ENCODE measurements at regions of chr1 and their contacts with region 1.

Region 1: DNA sequence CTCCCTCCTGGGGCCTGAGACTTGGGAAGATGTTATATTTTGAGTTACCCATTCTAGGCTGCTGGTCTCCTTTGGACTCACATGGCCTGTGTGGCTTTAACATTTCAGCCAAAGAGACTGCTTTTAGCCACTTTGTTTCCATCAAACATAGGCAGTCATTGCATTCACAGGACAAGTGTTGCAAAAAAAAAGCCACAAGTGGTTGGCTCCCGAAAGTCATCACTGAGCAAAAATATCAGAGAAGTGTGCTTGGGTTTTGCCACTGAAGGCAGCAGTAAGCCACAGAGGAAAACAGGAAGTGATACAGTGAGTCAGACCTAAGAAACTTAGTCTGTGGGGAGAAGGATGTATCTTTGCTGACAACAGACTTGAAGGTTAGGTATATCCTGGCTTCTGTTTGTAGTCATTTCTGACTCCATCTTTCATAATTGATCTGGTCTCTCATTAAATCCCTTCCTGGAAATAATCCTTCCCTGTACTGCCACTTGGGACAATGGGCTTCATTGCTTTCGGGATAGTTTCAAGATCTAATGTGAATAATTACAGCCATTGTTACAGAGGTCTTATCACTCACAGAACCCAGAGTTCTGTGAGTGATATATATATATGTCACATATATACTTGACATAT is 80.9 kb downstream of the COLGALT2 start:
- DNase-seq: no peak
- ATAC-seq: peak; percentile 41 to 84 (median 52)
- H3K4me3 ChIP-seq: no peak overlapping the region
- H3K27ac ChIP-seq: peak overlapping the region in 7 of 10 donors; percentile 5 to 86 (median 44)
- H3K4me1 ChIP-seq: peaks cover 0 to 49% (median 12%) of the 10 kb centered on the region in 9 donors
- H3K27me3 ChIP-seq: no peaks in the 10 kb centered on the region
- CTCF ChIP-seq: peak in 3 of 9 donors; percentile 6 to 26 (median 15)

Region 2: DNA sequence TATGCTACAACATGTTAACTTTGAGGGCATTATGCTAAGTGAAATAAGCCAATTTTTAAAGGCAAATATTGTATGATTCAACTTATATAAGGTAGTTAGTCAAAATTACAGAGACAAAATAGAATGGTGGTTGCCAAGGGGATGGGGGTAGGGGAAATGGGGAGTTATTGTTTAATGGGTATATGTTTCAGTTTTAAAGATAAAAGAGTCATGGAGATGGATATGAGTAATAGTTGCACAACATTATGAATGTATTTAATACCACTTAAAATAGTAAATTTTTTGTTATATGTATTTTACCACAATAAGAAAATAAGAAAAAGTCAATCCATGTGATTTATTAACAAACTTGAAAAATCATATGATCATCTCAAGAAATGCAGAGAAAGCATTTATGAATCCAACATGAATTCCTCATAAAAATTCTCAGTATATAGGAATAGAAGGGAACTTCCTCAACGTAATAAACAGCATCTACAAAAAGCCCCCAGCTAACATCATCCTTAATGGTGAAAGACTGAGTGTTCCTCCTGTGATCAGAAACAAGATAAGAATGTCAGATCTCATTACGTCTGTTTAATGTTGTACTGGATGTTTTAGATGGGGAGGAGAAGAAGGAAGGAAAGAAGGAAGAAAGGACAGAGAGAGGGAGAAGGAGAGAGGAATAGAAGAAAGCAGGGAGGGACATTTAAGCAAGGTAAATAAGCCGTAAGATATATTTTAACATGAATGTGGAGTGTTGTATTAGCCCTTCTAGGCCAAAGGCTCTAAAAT is 88.1 kb after region 1 on chr1:
- intact Hi-C with region 1: loop called in 3 of 10 experiments (anchors 5 to 10 kb)
- DNase-seq: no peak
- ATAC-seq: no peak
- H3K4me3 ChIP-seq: no peak overlapping the region
- H3K27ac ChIP-seq: no peak overlapping the region
- H3K4me1 ChIP-seq: no peaks in the 10 kb centered on the region
- H3K27me3 ChIP-seq: peaks cover 0 to 7% (median 0%) of the 10 kb centered on the region in 7 donors
- CTCF ChIP-seq: no peak

Measured in heart right ventricle (tissue), 16 donors.